MCF 10A (cell line): ENCODE measurements at regions of chr17 and their contacts with region 1.

Region 1: GRCh38 chr17:41665566-41666236 is 23.0 kb upstream of the EIF1 start:
- DNase-seq: peak; percentile 78
- H3K4me3 Mint-ChIP-seq: peak overlapping the region; percentile 70
- H3K27ac Mint-ChIP-seq: peak overlapping the region; percentile 66
- H3K4me1 Mint-ChIP-seq: peaks cover 28% of the 10 kb centered on the region
- H3K27me3 Mint-ChIP-seq: no peaks in the 10 kb centered on the region
- CTCF ChIP-seq: peak; percentile 95

Region 2: GRCh38 chr17:40803617-40804082 is 862.1 kb before region 1 on chr17:
- CTCF ChIA-PET with region 1: interaction called, 4 read pairs
- POLR2A ChIA-PET with region 1: no interaction called
- intact Hi-C with region 1: loop called (anchors 2 kb)
- DNase-seq: peak; percentile 84
- H3K4me3 Mint-ChIP-seq: no peak overlapping the region
- H3K27ac Mint-ChIP-seq: no peak overlapping the region
- H3K4me1 Mint-ChIP-seq: no peaks in the 10 kb centered on the region
- H3K27me3 Mint-ChIP-seq: no peaks in the 10 kb centered on the region
- CTCF ChIP-seq: peak; percentile 86

Region 3: DNA sequence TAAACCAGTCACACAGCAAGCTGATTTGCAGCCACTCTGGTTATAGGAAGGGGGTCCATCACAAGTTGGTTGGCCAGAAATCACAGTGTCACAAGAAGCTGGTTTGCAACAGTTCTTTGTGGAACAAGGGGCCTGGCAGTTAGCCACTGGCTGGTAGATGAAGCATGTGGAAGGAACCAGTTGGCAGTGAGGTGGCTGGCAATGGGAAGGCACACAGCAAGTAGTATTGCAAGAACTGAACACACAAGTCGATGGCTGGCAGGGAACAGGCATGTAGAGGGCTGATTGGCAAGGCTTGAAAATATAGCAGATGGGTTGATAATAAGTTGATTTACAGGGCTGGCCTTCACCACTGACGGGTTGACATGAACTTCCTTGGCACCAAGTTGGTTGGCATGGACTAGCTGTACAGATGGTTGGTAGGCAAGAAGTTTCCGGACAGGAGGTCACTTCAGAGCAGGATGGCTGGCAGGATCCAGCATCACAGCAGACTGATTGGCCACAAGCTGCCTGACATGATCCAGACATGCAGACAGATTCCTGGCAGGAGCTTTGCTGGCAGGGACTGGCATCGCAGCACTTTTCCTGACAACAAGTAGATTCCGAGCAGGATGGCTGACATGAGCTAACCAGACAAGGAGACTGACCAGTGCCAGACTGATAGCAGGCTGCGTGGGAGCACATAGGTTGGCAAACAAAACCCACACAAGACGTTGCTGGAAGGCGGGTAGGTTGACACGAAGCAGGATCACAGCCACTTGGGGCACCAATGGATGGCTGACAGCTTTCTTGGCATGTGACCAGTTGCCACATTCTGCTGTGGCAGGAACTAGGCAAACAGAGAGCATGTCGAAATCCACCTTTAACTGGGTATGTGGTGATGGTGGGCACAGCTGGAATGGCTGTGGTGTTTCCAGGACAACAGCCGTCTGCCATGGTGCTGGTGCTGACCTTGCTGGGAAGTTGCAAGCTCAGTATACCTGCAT is 363.5 kb before region 1 on chr17 and contains the start of gene KRTAP29-1:
- CTCF ChIA-PET with region 1: no interaction called
- POLR2A ChIA-PET with region 1: no interaction called
- intact Hi-C with region 1: no loop called
- DNase-seq: peak; percentile 17
- H3K4me3 Mint-ChIP-seq: no peak within 1 kb of the TSS
- H3K27ac Mint-ChIP-seq: no peak within 1 kb of the TSS
- H3K4me1 Mint-ChIP-seq: peaks cover 16% of the 10 kb centered on the region
- H3K27me3 Mint-ChIP-seq: peaks cover 4% of the 10 kb centered on the region
- CTCF ChIP-seq: no peak
- total RNA-seq, gene KRTAP29-1: not detected in 2 replicates

Region 4: GRCh38 chr17:41329281-41329948 is 336.3 kb before region 1 on chr17:
- CTCF ChIA-PET with region 1: interaction called, 6 read pairs
- POLR2A ChIA-PET with region 1: interaction called, 3 read pairs
- intact Hi-C with region 1: loop called (anchors 2 kb)
- DNase-seq: peak; percentile 62
- H3K4me3 Mint-ChIP-seq: no peak overlapping the region
- H3K27ac Mint-ChIP-seq: no peak overlapping the region
- H3K4me1 Mint-ChIP-seq: no peaks in the 10 kb centered on the region
- H3K27me3 Mint-ChIP-seq: no peaks in the 10 kb centered on the region
- CTCF ChIP-seq: peak; percentile 69

Region 5: GRCh38 chr17:41367426-41368075 is 298.1 kb before region 1 on chr17:
- CTCF ChIA-PET with region 1: no interaction called
- POLR2A ChIA-PET with region 1: no interaction called
- intact Hi-C with region 1: no loop called
- DNase-seq: no peak
- H3K4me3 Mint-ChIP-seq: no peak overlapping the region
- H3K27ac Mint-ChIP-seq: no peak overlapping the region
- H3K4me1 Mint-ChIP-seq: no peaks in the 10 kb centered on the region
- H3K27me3 Mint-ChIP-seq: peaks cover 23% of the 10 kb centered on the region
- CTCF ChIP-seq: no peak

Region 6: GRCh38 chr17:41579484-41580243 is 86.0 kb before region 1 on chr17:
- CTCF ChIA-PET with region 1: interaction called, 60 read pairs
- POLR2A ChIA-PET with region 1: interaction called, 3 read pairs
- intact Hi-C with region 1: loop called (anchors 1 kb)
- DNase-seq: peak; percentile 96
- H3K4me3 Mint-ChIP-seq: peak overlapping the region; percentile 1
- H3K27ac Mint-ChIP-seq: peak overlapping the region; percentile 97
- H3K4me1 Mint-ChIP-seq: peaks cover 60% of the 10 kb centered on the region
- H3K27me3 Mint-ChIP-seq: no peaks in the 10 kb centered on the region
- CTCF ChIP-seq: peak; percentile 87

Region 7: DNA sequence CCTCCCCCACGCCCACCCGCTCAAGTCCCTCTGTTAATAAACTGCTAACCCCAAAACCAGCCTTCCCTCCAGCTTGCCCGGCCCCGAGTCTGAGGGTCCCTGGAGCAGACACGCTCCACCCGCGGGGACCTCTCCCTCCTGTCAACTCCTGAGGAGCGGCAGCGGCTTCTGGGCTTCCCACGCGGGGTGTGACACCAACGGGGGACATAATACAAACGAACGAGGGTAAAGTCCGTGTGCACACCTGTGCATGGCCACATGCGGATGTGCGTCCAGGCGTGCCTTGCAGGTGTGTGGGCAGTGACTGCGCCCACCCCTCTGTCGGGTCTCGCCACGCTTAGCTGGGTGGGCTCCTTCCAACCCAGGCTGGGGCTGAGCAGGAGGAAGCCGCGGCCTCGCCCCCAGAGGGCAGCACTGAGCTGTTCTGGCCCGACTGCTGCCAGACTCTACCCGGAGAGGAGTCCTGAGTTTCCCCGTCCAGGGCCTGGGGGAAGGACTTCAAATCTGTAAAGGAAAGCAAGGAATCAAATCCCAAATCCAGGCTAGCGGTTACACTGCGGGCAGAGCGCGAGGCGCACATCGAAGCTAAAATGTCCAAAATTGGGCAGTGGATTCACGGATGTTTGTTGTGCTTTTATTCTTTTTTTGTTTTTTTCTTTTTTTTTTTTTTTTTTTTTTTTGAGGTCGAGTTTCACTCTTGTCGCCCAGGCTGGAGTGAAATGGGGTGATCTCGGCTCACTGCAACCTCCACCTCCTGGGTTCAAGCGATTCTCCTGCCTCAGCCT is 17.1 kb before region 1 on chr17:
- CTCF ChIA-PET with region 1: interaction called, 566 read pairs
- POLR2A ChIA-PET with region 1: interaction called, 148 read pairs
- intact Hi-C with region 1: loop called (anchors 1 kb)
- DNase-seq: peak; percentile 87
- H3K4me3 Mint-ChIP-seq: peak overlapping the region; percentile 22
- H3K27ac Mint-ChIP-seq: peak overlapping the region; percentile 93
- H3K4me1 Mint-ChIP-seq: peaks cover 34% of the 10 kb centered on the region
- H3K27me3 Mint-ChIP-seq: no peaks in the 10 kb centered on the region
- CTCF ChIP-seq: peak; percentile 88